Endothelial cell of umbilical vein (primary cell): ENCODE measurements at regions of chr21 and their contacts with region 1.

Region 1: GRCh38 chr21:44911389-44912157 is 9.1 kb downstream of the ITGB2 start:
- DNase-seq: peak; percentile 71
- H3K4me3 ChIP-seq: no peak overlapping the region
- H3K27ac ChIP-seq: no peak overlapping the region
- H3K4me1 ChIP-seq: peaks cover 25% of the 10 kb centered on the region
- H3K27me3 ChIP-seq: no peaks in the 10 kb centered on the region
- CTCF ChIP-seq: peak; percentile 85
- POLR2A ChIP-seq: no peak

Region 2: DNA sequence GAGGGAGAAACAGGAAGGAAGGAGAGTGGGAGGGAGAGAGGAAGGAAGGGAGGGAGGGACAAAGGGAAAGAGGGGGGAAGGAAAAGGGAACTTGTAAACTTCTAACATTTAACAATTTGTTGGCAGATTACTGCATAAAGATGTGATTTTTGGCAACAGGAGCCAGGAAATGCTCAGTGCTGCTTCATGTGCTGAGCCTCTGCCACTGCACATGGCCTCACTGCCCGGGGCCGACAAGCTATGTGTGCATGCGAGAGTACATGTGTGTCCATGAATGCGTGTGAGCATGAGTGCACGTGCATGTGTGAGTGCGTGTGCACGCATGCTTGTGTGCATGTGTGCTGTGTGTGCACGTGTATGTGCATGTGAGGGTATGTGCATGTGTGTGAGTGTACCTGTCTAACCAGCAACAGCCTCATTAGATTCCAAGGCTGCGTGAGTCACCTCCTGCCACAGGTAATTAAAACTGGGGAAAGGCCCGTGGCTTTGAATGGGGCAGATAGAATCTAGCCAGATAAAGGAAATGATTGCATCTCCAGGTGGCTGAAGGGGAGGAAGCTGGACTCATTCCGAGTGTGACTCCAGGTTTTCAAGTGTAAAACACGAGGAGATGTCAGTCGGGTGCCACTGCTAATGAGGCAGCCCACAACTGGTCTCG is 158.8 kb before region 1 on chr21:
- CTCF ChIA-PET with region 1: no interaction called
- POLR2A ChIA-PET with region 1: no interaction called
- dilution Hi-C with region 1: no loop called
- intact Hi-C with region 1: loop called (anchors 2 kb)
- DNase-seq: peak; percentile 27
- H3K4me3 ChIP-seq: no peak overlapping the region
- H3K27ac ChIP-seq: no peak overlapping the region
- H3K4me1 ChIP-seq: peaks cover 42% of the 10 kb centered on the region
- H3K27me3 ChIP-seq: peaks cover 3 to 4% of the 10 kb centered on the region in 2 experiments
- CTCF ChIP-seq: peak; percentile 18 to 21
- POLR2A ChIP-seq: no peak

Region 3: DNA sequence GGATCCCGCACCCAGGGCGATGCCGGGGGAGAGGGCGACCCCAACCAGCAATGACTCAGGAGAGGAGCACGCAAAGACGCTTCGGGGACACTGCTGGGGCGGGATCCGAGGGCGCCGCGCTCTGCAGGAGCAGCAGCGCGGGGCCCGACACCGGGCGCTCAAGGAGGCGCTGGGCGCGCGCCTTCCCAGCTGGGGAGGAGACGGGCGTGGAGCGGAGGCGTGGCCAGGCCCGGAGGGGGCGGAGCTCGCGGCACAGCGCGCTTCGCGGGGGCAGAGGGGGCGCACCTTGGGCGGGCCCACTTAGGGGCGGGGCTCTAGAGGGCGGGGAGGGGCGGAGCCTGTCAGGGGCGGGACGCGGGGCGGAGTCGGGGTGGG is 94.1 kb before region 1 on chr21:
- CTCF ChIA-PET with region 1: interaction called, 3 read pairs
- POLR2A ChIA-PET with region 1: no interaction called
- dilution Hi-C with region 1: no loop called
- intact Hi-C with region 1: loop called (anchors 1 kb)
- DNase-seq: peak; percentile 80
- H3K4me3 ChIP-seq: peak overlapping the region; percentile 67 to 81 (median 71)
- H3K27ac ChIP-seq: peak overlapping the region; percentile 59
- H3K4me1 ChIP-seq: peaks cover 4% of the 10 kb centered on the region
- H3K27me3 ChIP-seq: no peaks in the 10 kb centered on the region
- CTCF ChIP-seq: peak in 1 of 2 donors; percentile 2
- POLR2A ChIP-seq: no peak

Region 4: GRCh38 chr21:44873356-44874239 is 38.0 kb before region 1 on chr21 and contains the start of gene PTTG1IP:
- CTCF ChIA-PET with region 1: interaction called, 5 read pairs
- POLR2A ChIA-PET with region 1: no interaction called
- dilution Hi-C with region 1: no loop called
- intact Hi-C with region 1: loop called (anchors 1 kb)
- DNase-seq: peak; percentile 99
- H3K4me3 ChIP-seq: peak within 1 kb of the TSS; percentile 83 to 96 (median 91)
- H3K27ac ChIP-seq: peak within 1 kb of the TSS; percentile 97
- H3K4me1 ChIP-seq: peaks cover 59% of the 10 kb centered on the region
- H3K27me3 ChIP-seq: no peaks in the 10 kb centered on the region
- CTCF ChIP-seq: no peak
- POLR2A ChIP-seq: peak; percentile 58
- total RNA-seq, gene PTTG1IP: 406 and 415 TPM in 2 replicates

Region 5: GRCh38 chr21:44892536-44893277 is 18.9 kb before region 1 on chr21:
- CTCF ChIA-PET with region 1: interaction called, 37 read pairs
- POLR2A ChIA-PET with region 1: no interaction called
- dilution Hi-C with region 1: no loop called
- intact Hi-C with region 1: loop called (anchors 2 kb)
- DNase-seq: peak; percentile 54
- H3K4me3 ChIP-seq: no peak overlapping the region
- H3K27ac ChIP-seq: no peak overlapping the region
- H3K4me1 ChIP-seq: no peaks in the 10 kb centered on the region
- H3K27me3 ChIP-seq: no peaks in the 10 kb centered on the region
- CTCF ChIP-seq: peak; percentile 91 to 92
- POLR2A ChIP-seq: no peak

Region 6: DNA sequence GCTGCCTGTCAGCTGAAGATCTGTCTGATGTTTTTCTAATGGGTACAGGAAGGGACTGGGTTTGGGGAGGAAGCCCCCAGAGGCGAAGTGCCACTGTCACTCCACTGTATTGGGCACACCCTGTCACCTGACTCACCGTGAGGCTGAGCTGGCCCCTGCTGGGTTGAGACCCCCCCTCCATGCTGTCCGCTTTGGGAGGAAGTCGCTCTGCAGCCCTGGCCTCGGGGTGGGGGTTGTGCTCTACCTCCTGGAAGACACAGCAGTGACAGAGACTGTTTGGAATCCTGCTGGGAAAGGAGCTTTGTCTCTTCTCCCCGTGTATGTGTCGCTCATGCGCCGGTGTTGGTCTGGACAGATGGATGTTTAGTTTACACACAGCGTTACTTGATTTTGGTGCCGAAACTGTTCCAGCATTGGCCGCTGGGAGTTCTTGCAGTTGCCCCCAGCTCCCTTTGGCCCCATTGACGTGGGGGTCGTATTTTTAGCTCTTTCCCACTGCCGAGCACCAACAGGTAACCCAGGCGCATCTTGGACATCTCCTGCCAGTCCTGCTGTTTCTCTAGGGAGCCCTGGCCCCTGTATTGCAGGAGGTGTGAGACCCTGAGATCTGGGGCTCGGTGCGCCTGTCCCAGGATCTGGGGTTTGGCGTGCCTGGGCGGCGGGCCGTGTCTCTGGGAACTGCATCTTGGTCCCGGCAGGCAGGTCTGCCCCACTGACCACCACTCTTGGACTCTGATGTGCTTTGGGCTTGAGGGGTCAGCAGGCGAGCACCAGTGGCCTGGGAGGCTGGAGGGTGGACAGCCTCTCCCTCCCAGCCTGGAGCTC is 58.6 kb after region 1 on chr21:
- CTCF ChIA-PET with region 1: no interaction called
- POLR2A ChIA-PET with region 1: no interaction called
- dilution Hi-C with region 1: no loop called
- intact Hi-C with region 1: no loop called
- DNase-seq: peak; percentile 8
- H3K4me3 ChIP-seq: no peak overlapping the region
- H3K27ac ChIP-seq: peak overlapping the region; percentile 10
- H3K4me1 ChIP-seq: peaks cover 12% of the 10 kb centered on the region
- H3K27me3 ChIP-seq: no peaks in the 10 kb centered on the region
- CTCF ChIP-seq: no peak
- POLR2A ChIP-seq: no peak

Region 7: GRCh38 chr21:45109831-45110492 is 198.4 kb after region 1 on chr21:
- CTCF ChIA-PET with region 1: no interaction called
- POLR2A ChIA-PET with region 1: no interaction called
- dilution Hi-C with region 1: no loop called
- intact Hi-C with region 1: no loop called
- DNase-seq: peak; percentile 56
- H3K4me3 ChIP-seq: peak overlapping the region in 2 of 3 experiments; percentile 4 to 43
- H3K27ac ChIP-seq: peak overlapping the region; percentile 85
- H3K4me1 ChIP-seq: peaks cover 31% of the 10 kb centered on the region
- H3K27me3 ChIP-seq: no peaks in the 10 kb centered on the region
- CTCF ChIP-seq: no peak
- POLR2A ChIP-seq: no peak